ENCODE measurements at regions of chr1 and their contacts with region 1.

Region 1: GRCh38 chr1:43763497-43763973 is 56.2 kb downstream of the ST3GAL3 start:
- DNase-seq: peak; percentile 73
- H3K4me3 ChIP-seq: no peak overlapping the region
- CTCF ChIP-seq: peak; percentile 79

Region 2: GRCh38 chr1:43736819-43737218 is 26.7 kb before region 1 on chr1:
- CTCF ChIA-PET with region 1: interaction called, 13 read pairs
- POLR2A ChIA-PET with region 1: no interaction called
- DNase-seq: no peak
- H3K4me3 ChIP-seq: no peak overlapping the region
- CTCF ChIP-seq: no peak

Region 3: GRCh38 chr1:43783671-43784205 is 20.2 kb after region 1 on chr1:
- CTCF ChIA-PET with region 1: interaction called, 10 read pairs
- POLR2A ChIA-PET with region 1: no interaction called
- DNase-seq: no peak
- H3K4me3 ChIP-seq: no peak overlapping the region
- CTCF ChIP-seq: no peak

Region 4: GRCh38 chr1:43912607-43913006 is 149.1 kb after region 1 on chr1:
- CTCF ChIA-PET with region 1: interaction called, 17 read pairs
- POLR2A ChIA-PET with region 1: no interaction called
- DNase-seq: peak; percentile 12
- H3K4me3 ChIP-seq: no peak overlapping the region
- CTCF ChIP-seq: no peak

Region 5: GRCh38 chr1:43954036-43954435 is 190.5 kb after region 1 on chr1:
- CTCF ChIA-PET with region 1: interaction called, 11 read pairs
- POLR2A ChIA-PET with region 1: no interaction called
- DNase-seq: no peak
- H3K4me3 ChIP-seq: no peak overlapping the region
- CTCF ChIP-seq: no peak

Region 6: DNA sequence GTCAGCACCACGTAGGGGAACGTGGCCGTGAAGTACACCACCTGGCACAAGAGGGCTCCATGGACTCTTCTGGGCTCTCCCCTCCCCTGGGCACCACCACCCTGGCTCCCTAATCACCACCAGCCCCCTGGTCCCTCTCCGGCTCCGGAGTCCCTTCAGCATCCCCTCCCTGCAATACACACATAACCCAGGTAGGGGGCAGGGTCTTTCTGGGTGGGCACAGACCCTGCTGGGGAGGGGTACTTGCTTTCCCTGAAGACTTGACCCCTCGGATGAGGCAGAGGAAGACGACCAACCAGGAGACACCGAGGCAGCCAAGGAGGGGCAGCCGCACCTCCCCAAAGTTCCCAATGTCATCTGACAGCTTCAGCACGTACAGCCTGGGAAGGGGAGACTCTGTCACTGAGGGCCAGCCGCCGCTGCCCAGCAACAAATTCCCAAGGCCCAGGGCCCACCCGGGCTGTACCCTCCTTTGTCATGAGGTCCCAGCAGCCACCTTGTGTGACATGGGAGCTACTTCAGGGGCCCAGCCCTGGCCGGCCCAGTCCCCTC is 239.1 kb after region 1 on chr1:
- CTCF ChIA-PET with region 1: interaction called, 18 read pairs
- POLR2A ChIA-PET with region 1: no interaction called
- DNase-seq: no peak
- H3K4me3 ChIP-seq: no peak overlapping the region
- CTCF ChIP-seq: no peak